ENCODE measurements at regions of chrX and their contacts with region 1.

Region 1: GRCh38 chrX:111680988-111681779 is at the start of gene ALG13:
- DNase-seq: peak; percentile 79
- H3K4me3 Mint-ChIP-seq: peak within 1 kb of the TSS; percentile 88
- H3K27ac Mint-ChIP-seq: peak within 1 kb of the TSS; percentile 96
- H3K4me1 Mint-ChIP-seq: peaks cover 23% of the 10 kb centered on the region
- H3K27me3 Mint-ChIP-seq: no peaks in the 10 kb centered on the region
- total RNA-seq, gene ALG13: 53.4 and 57.6 TPM in 2 replicates

Region 2: DNA sequence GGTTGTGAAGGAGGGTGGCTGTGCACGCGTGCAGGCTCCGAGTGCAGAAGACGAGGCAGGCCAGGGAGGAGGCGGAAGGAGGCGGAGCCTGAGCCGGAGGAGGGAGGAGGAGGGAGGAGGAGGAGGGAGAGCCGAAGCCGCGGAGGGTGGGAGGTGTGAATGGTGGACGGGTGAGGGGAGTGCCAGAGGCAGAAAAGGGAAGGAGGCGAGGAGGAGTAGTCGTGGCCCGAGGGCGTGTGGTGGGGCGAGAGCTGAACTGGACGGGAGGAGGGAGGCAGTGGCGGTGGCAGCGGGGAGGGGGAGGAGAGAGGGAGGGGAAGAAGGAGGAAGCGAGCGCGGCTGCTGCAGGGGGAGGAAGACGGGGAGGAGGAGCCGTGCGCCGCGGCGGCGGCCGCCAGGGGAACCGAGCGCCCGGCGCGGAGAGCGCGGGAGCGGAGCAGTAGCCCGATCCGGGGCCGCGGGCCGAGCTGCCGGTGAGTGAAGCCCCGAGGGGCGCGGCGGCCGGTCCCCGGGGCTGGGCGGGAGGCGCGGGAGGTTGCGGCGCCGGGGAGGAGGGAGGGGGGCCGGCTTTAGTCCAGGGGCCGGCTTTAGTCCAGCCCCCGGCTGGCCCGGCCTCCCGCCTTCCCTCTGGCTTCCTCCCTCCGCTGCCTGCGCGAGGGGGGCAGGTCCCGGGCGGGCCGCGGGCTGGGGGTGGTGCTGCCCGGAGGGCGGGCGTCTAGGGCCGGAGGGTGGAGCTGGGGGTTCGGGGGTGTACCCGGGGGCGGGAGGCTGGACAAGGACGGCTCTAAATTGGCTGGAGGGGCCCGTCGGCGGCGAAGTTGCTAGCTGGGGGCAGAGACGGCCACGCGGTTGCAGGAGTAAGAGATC is 1678.7 kb before region 1 on chrX and contains the start of gene TMEM164:
- intact Hi-C with region 1: loop called (anchors 5 kb)
- DNase-seq: peak; percentile 72
- H3K4me3 Mint-ChIP-seq: peak within 1 kb of the TSS; percentile 92
- H3K27ac Mint-ChIP-seq: peak within 1 kb of the TSS; percentile 92
- H3K4me1 Mint-ChIP-seq: peaks cover 23% of the 10 kb centered on the region
- H3K27me3 Mint-ChIP-seq: no peaks in the 10 kb centered on the region
- total RNA-seq, gene TMEM164: 17.9 and 19.1 TPM in 2 replicates

Region 3: GRCh38 chrX:111123125-111123524 is 558.1 kb before region 1 on chrX:
- intact Hi-C with region 1: loop called (anchors 10 kb)
- DNase-seq: no peak
- H3K4me3 Mint-ChIP-seq: peak overlapping the region; percentile 65
- H3K27ac Mint-ChIP-seq: peak overlapping the region; percentile 79
- H3K4me1 Mint-ChIP-seq: peaks cover 12% of the 10 kb centered on the region
- H3K27me3 Mint-ChIP-seq: no peaks in the 10 kb centered on the region

Region 4: DNA sequence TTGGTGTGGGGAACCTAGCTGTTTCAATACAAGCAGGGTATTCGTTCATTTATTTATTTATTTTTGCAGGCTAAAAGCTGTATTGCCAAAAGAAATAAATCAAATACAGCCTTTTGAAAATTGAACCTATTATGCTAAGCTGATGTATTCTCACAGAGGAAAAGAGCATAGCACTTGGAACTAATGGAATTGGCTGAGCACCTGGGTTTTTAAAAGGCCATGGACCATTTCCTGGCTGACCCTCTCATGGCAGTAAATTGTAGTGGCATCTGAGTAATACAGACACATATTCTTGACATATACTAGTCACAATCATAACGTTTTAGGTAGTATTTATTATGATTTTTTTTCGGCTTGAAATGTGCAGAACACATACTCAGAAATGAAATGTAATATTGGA is 72.0 kb before region 1 on chrX:
- intact Hi-C with region 1: no loop called
- DNase-seq: no peak
- H3K4me3 Mint-ChIP-seq: no peak overlapping the region
- H3K27ac Mint-ChIP-seq: no peak overlapping the region
- H3K4me1 Mint-ChIP-seq: no peaks in the 10 kb centered on the region
- H3K27me3 Mint-ChIP-seq: no peaks in the 10 kb centered on the region

Measured in activated T-helper 1 cell treated with anti-CD3 and anti-CD28 coated beads, Interleukin-12 subunit alpha, Interleukin-12 subunit beta, Interleukin-2, Interleukin-4 antibody, amounts not matched to agents 30 ng/mL and 10 ng/mL and 1 ng/mL, durations not matched to agents 14 hours and 24 hours and 36 hours (primary cell).